Activated T-helper 1 cell treated with anti-CD3 and anti-CD28 coated beads, Interleukin-12 subunit alpha, Interleukin-12 subunit beta, Interleukin-2, Interleukin-4 antibody, amounts not matched to agents 30 ng/mL and 10 ng/mL and 1 ng/mL, durations not matched to agents 14 hours and 24 hours and 36 hours (primary cell): ENCODE measurements at regions of chr10 and their contacts with region 1.

Region 1: GRCh38 chr10:33193057-33193700 is 141.3 kb downstream of the NRP1 start:
- DNase-seq: peak; percentile 52
- H3K4me3 Mint-ChIP-seq: no peak overlapping the region
- H3K27ac Mint-ChIP-seq: no peak overlapping the region
- H3K4me1 Mint-ChIP-seq: no peaks in the 10 kb centered on the region
- H3K27me3 Mint-ChIP-seq: peaks cover 17% of the 10 kb centered on the region

Region 2: DNA sequence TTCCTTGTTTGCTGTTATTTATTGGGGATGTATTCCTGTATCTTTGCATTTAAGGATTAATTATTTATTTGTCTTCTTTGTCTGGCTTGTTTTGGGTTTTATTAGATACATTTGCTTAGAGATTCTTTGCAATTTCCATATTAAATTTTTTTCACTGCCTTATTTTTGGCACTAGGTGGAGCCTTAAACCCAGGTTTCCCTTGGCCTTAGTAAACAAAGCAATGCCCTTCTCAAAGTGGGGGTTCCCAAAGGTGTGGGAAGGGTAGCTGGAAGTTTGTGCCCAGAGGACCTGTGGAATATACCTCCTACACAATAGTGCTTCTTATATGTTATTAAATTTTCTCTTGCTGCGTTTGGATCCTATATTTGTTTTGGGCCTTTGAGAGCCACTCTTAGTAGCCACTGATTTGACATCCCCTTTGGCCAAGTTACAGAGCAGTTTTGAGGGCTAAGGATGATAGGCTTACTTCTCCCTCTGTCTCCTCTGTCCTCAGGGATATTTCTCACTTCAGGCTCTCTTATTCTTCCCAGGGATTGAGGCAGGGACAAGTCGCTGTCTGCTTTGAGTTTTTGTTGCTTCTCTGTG is 397.5 kb before region 1 on chr10:
- intact Hi-C with region 1: loop called (anchors 1 kb)
- DNase-seq: no peak
- H3K4me3 Mint-ChIP-seq: no peak overlapping the region
- H3K27ac Mint-ChIP-seq: no peak overlapping the region
- H3K4me1 Mint-ChIP-seq: no peaks in the 10 kb centered on the region
- H3K27me3 Mint-ChIP-seq: peaks cover 2% of the 10 kb centered on the region

Region 3: GRCh38 chr10:33211106-33211878 is 18.1 kb after region 1 on chr10:
- intact Hi-C with region 1: loop called (anchors 2 kb)
- DNase-seq: no peak
- H3K4me3 Mint-ChIP-seq: no peak overlapping the region
- H3K27ac Mint-ChIP-seq: peak overlapping the region; percentile 76
- H3K4me1 Mint-ChIP-seq: peaks cover 30% of the 10 kb centered on the region
- H3K27me3 Mint-ChIP-seq: peaks cover 2% of the 10 kb centered on the region

Region 4: GRCh38 chr10:33244354-33244967 is 51.3 kb after region 1 on chr10:
- intact Hi-C with region 1: no loop called
- DNase-seq: no peak
- H3K4me3 Mint-ChIP-seq: no peak overlapping the region
- H3K27ac Mint-ChIP-seq: no peak overlapping the region
- H3K4me1 Mint-ChIP-seq: peaks cover 37% of the 10 kb centered on the region
- H3K27me3 Mint-ChIP-seq: peaks cover 44% of the 10 kb centered on the region

Region 5: DNA sequence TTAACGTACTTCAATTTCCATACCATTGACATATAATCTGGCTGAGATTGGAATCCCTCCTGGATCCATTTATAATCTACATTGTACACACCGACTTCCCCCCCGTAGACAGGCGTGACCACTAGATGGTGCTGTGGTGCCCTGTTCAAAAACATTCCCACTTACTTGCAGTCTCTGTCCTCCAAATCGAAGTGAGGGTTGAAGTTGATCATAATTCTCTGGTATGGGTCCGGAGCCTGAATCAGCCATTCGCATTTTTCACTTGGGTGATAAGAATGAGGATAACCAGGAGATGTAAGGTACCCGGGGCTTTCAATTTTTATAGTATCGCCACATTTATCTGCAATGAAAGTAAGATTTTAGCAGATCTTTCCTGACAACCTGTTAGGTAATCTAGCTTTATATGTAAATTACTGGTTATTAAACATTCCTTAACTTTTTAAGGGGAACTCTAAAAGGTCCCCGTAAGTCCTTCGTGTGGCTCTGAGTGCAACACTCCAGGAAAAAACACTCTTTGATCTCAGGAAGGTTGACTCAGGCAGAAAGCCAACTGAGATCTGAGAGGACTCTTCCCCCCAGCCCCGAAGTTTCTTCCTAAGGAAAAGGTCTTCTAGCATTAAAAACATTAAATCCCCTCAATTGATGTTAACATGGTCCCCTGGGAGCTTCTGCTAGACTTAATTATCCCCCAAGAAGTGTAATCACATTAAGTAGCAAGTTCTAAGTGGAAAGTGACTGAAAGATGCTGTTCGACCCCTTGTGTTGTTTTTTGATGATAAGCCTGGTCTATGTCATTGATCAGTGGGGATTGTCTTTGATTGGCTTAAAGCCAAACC is 137.6 kb after region 1 on chr10:
- intact Hi-C with region 1: loop called (anchors 1 kb)
- DNase-seq: peak; percentile 53
- H3K4me3 Mint-ChIP-seq: no peak overlapping the region
- H3K27ac Mint-ChIP-seq: no peak overlapping the region
- H3K4me1 Mint-ChIP-seq: peaks cover 22% of the 10 kb centered on the region
- H3K27me3 Mint-ChIP-seq: peaks cover 55% of the 10 kb centered on the region

Region 6: GRCh38 chr10:34637418-34637911 is 1444.3 kb after region 1 on chr10:
- intact Hi-C with region 1: loop called (anchors 1 kb)
- DNase-seq: peak; percentile 34
- H3K4me3 Mint-ChIP-seq: no peak overlapping the region
- H3K27ac Mint-ChIP-seq: no peak overlapping the region
- H3K4me1 Mint-ChIP-seq: peaks cover 14% of the 10 kb centered on the region
- H3K27me3 Mint-ChIP-seq: peaks cover 6% of the 10 kb centered on the region